Psoas muscle (tissue), 8 donors: ENCODE measurements at regions of chr3 and their contacts with region 1.

Region 1: DNA sequence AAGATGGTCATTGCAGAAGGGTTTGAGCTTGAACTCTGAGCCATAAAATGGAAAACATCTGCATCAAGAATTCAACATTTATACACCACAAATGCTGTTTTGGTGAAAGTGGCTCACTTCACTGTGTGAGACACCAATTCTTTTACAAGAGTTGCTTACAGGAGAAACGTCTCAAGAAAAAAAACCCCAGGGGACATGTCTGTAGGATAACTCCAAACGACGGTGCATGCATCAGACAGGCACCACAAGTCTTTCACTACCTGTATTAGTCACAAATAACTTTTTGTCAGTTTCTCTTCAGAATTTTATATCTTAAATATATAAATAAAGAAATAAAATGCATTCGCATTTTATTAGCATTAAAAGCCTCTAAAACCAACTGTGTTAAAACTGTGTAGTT is 164.3 kb downstream of the EFHB start:
- DNase-seq: no peak
- ATAC-seq: no peak
- H3K4me3 ChIP-seq: no peak overlapping the region
- H3K27ac ChIP-seq: no peak overlapping the region
- H3K4me1 ChIP-seq: no peaks in the 10 kb centered on the region
- H3K27me3 ChIP-seq: no peaks in the 10 kb centered on the region
- CTCF ChIP-seq: no peak

Region 2: GRCh38 chr3:19792388-19792787 is 22.7 kb after region 1 on chr3:
- intact Hi-C with region 1: loop called in 1 of 2 experiments (anchors 1 kb)
- DNase-seq: no peak
- ATAC-seq: no peak
- H3K4me3 ChIP-seq: no peak overlapping the region
- H3K27ac ChIP-seq: no peak overlapping the region
- H3K4me1 ChIP-seq: no peaks in the 10 kb centered on the region
- H3K27me3 ChIP-seq: no peaks in the 10 kb centered on the region
- CTCF ChIP-seq: no peak